GM10248 (cell line): ENCODE measurements at regions of chr19 and their contacts with region 1.

Region 1: GRCh38 chr19:14556662-14557188 is 15.1 kb downstream of the NDUFB7 start:
- DNase-seq: peak; percentile 91
- CTCF ChIP-seq: peak; percentile 91

Region 2: GRCh38 chr19:14544977-14545715 is 11.6 kb before region 1 on chr19:
- CTCF ChIA-PET with region 1: interaction called, 35 read pairs
- POLR2A ChIA-PET with region 1: no interaction called
- DNase-seq: peak; percentile 7
- CTCF ChIP-seq: no peak

Region 3: GRCh38 chr19:14639536-14640277 is 83.0 kb after region 1 on chr19:
- CTCF ChIA-PET with region 1: no interaction called
- POLR2A ChIA-PET with region 1: no interaction called
- DNase-seq: no peak
- CTCF ChIP-seq: no peak